Activated CD4-positive, alpha-beta T cell treated with anti-CD3 and anti-CD28 coated beads for 36 hours (primary cell): ENCODE measurements at regions of chr14 and their contacts with region 1.

Region 1: DNA sequence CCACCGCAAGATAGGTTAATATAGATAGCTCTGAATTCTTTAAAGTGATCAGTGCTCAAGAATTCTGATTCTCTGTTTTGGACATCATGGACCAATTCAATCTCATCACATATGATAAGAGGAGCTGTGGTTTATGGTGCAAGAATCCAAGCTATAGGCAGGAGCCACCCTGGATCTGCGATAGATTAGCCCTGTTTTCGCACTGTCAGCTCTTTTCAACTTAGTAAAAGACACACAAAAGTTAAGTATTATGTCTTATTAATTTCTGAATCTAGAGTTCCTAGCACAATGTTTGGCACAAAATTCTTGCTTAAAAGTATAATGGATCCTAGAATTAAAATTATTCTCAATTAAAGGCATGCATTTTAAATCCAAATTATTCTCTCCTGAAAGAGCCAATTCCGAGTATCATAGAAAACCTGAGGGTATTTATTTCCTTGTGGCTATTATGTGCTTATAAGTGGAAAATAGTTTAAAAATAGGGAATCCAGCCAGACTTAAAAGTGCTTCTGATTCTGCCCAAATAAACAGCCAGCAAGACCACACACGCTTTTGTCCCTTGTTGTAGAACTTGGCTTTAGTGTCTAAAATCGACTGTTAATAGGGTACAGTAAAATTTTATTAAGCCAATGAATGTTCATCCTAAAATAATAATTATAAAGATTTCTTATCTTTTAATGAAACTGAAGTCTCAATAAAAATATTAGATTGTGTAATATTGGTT is 184.9 kb upstream of the FLRT2 start:
- DNase-seq: no peak
- ATAC-seq: no peak
- H3K4me3 Mint-ChIP-seq: no peak overlapping the region
- H3K27ac Mint-ChIP-seq: no peak overlapping the region
- H3K4me1 Mint-ChIP-seq: no peaks in the 10 kb centered on the region
- H3K27me3 Mint-ChIP-seq: no peaks in the 10 kb centered on the region

Region 2: GRCh38 chr14:85195872-85196477 is 149.0 kb before region 1 on chr14:
- CTCF ChIA-PET with region 1: no interaction called
- POLR2A ChIA-PET with region 1: no interaction called
- intact Hi-C with region 1: no loop called
- DNase-seq: no peak
- ATAC-seq: no peak
- H3K4me3 Mint-ChIP-seq: no peak overlapping the region
- H3K27ac Mint-ChIP-seq: no peak overlapping the region
- H3K4me1 Mint-ChIP-seq: no peaks in the 10 kb centered on the region
- H3K27me3 Mint-ChIP-seq: no peaks in the 10 kb centered on the region

Region 3: GRCh38 chr14:85319998-85320630 is 24.9 kb before region 1 on chr14:
- CTCF ChIA-PET with region 1: no interaction called
- POLR2A ChIA-PET with region 1: interaction called, 10 read pairs
- intact Hi-C with region 1: no loop called
- DNase-seq: no peak
- ATAC-seq: no peak
- H3K4me3 Mint-ChIP-seq: no peak overlapping the region
- H3K27ac Mint-ChIP-seq: no peak overlapping the region
- H3K4me1 Mint-ChIP-seq: no peaks in the 10 kb centered on the region
- H3K27me3 Mint-ChIP-seq: no peaks in the 10 kb centered on the region